ENCODE measurements at regions of chr11 and their contacts with region 1.

Region 1: DNA sequence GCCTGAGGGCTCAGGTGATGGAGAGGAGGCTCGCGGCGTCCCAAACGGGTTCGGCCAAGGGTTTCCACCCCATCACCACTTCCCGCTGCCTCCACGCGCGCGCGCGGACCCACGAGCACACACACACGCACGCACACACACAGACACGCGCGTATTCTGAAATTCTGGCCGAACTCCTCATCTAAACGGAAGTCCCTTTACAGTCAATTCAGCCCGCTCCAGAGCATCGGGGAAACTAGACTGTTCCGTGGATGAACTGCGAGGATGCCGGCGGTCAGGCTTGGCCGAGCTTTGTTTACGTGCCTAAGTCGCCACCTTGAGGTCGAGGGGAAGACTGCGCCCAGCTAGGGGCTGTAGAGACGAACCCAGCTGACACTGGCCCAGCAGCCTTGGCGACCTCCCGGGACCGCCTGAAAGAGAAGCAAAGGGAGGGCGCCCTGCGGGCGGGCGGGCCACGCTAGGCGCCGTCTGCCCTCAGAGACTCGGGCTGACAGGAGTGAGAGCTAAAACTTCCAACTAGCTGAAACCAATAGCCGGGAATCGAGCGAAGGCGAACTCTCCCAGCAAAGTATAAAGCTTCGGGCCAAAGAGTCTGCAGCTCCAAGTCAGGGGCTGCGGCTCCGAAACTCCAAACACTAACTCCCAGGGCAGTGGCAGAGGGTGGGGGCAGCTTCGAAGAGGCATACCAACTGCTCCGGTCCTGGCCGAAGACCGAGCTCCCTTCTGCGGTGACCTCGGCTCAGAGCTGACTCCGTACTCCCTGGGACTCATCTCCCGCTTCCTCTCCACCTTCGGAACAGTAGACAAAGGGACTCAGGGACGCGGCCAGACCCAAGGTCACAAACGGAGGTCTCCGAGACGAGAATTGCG is 124.7 kb upstream of the C11orf58 start:
- DNase-seq: peak; percentile 87 to 90
- H3K4me3 ChIP-seq: no peak overlapping the region
- H3K27ac ChIP-seq: no peak overlapping the region
- H3K4me1 ChIP-seq: peaks cover 6 to 17% of the 10 kb centered on the region in 2 donors
- H3K27me3 ChIP-seq: no peaks in the 10 kb centered on the region
- CTCF ChIP-seq: peak; percentile 58 to 94 (median 87)
- POLR2A ChIP-seq: no peak

Region 2: DNA sequence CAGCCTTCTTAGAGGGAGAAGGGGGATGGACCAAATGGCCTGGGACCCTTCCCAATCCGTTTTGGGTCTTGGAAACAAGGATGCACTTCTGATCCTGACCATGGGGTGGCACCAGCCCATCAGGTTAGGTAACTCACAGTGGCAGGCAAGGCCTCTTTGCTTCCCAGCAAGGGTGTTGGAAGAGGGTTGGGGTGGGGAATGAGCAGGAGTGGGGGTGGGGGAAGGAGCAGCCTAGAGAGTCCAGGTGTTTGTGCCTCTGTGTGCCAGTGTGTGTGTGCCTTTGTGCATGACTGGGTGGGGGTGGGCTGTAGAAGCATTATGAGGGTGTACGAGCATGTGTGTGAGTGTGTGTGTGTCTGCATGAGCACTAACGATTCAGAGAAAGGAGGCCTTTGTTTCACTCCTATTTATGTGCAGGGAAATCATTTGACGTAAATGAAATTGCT is 1285.9 kb before region 1 on chr11:
- intact Hi-C with region 1: loop called (anchors 5 kb)
- DNase-seq: peak; percentile 53 to 56
- H3K4me3 ChIP-seq: no peak overlapping the region
- H3K27ac ChIP-seq: no peak overlapping the region
- H3K4me1 ChIP-seq: no peaks in the 10 kb centered on the region
- H3K27me3 ChIP-seq: no peaks in the 10 kb centered on the region
- CTCF ChIP-seq: peak; percentile 9 to 66 (median 43)
- POLR2A ChIP-seq: no peak

Region 3: DNA sequence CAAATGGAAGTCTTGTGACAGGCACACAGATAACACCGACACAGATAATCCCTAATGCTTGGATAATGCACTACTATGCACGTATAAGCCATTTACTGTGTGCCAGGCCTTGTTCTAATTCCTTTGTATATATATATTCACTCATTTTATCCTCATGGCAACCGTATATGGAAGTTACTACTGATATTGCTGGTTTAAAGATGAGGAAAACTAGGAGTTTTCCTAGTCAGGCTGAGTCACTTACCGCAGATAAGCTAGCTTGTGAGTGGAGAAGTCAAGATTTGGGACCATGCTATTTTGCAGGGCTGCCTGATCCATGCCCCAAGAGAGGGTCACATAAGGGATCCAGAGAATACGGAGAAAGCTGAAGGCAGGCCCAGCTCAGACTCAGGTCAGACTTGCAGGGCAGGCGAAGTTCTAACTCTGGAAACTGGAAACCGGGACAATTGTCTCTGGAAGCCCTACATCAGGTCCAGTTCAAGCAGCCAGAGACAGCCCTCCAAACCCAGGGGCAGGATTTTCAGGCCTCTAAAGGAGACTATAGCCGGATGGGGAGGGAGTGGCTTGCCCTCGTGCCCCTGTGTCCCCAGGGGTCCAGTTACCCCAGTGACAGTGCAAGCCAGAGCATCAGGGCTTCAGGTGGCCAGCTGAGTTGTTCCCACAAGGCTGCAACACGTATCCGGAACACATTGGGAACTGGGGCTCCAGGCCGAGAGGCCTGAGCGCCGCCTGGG is 964.2 kb before region 1 on chr11:
- intact Hi-C with region 1: loop called (anchors 5 kb)
- DNase-seq: no peak
- H3K4me3 ChIP-seq: no peak overlapping the region
- H3K27ac ChIP-seq: peak overlapping the region in 2 of 3 donors; percentile 33 to 68
- H3K4me1 ChIP-seq: peaks cover 4 to 14% of the 10 kb centered on the region in 2 donors
- H3K27me3 ChIP-seq: no peaks in the 10 kb centered on the region
- CTCF ChIP-seq: no peak
- POLR2A ChIP-seq: no peak

Region 4: GRCh38 chr11:15941201-15941770 is 672.5 kb before region 1 on chr11:
- intact Hi-C with region 1: loop called (anchors 5 kb)
- DNase-seq: peak; percentile 47 to 59
- H3K4me3 ChIP-seq: no peak overlapping the region
- H3K27ac ChIP-seq: no peak overlapping the region
- H3K4me1 ChIP-seq: peaks cover 0 to 4% of the 10 kb centered on the region in 2 donors
- H3K27me3 ChIP-seq: no peaks in the 10 kb centered on the region
- CTCF ChIP-seq: peak in 5 of 6 experiments; percentile 72 to 98 (median 90)
- POLR2A ChIP-seq: no peak

Region 5: DNA sequence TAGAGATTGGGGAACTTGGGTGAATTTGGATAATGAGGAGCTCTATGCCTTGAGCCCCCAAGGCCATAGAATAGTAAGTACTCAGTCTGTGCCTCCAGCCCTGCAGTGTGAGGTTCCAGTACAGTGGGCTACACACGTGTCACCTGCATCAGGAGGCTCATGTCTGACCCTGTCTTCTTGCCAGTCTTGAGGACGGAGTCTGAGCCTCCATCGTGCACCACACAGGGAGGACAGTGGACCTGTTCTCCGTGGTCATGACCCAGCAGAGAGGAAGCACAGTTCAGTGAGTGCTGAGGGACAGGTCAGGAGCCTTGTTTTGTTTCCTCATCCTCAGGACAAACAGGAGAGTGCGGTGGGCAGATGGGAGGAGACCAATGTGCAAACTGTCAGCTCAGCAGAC is 432.9 kb after region 1 on chr11:
- intact Hi-C with region 1: no loop called
- DNase-seq: no peak
- H3K4me3 ChIP-seq: no peak overlapping the region
- H3K27ac ChIP-seq: no peak overlapping the region
- H3K4me1 ChIP-seq: no peaks in the 10 kb centered on the region
- H3K27me3 ChIP-seq: no peaks in the 10 kb centered on the region
- CTCF ChIP-seq: no peak
- POLR2A ChIP-seq: no peak